ENCODE measurements at regions of chr10 and their contacts with region 1.

Region 1: GRCh38 chr10:124388823-124389612 is 29.7 kb downstream of the OAT start:
- DNase-seq: peak; percentile 73 to 97 (median 88)
- ATAC-seq: peak; percentile 97 to 98 (median 97)
- H3K4me3 ChIP-seq: peak overlapping the region; percentile 35 to 53
- H3K4me3 Mint-ChIP-seq: peak overlapping the region; percentile 46 to 57 (median 57)
- H3K27ac ChIP-seq: peak overlapping the region; percentile 18
- H3K27ac Mint-ChIP-seq: peak overlapping the region in 1 of 2 donors; percentile 58
- H3K4me1 ChIP-seq: peaks cover 0 to 12% of the 10 kb centered on the region in 2 experiments
- H3K4me1 Mint-ChIP-seq: peaks cover 0 to 5% (median 3%) of the 10 kb centered on the region in 3 donors
- H3K27me3 ChIP-seq: peaks cover 3 to 33% of the 10 kb centered on the region in 2 experiments
- H3K27me3 Mint-ChIP-seq: peaks cover 6 to 7% of the 10 kb centered on the region in 2 donors

Region 2: GRCh38 chr10:123994417-123995081 is 394.5 kb before region 1 on chr10:
- CTCF ChIA-PET with region 1: interaction called, 34 to 73 read pairs
- POLR2A ChIA-PET with region 1: no interaction called
- DNase-seq: peak; percentile 32 to 84 (median 67)
- ATAC-seq: peak; percentile 77 to 89 (median 82)
- H3K4me3 ChIP-seq: peak overlapping the region in 1 of 2 donors; percentile 4
- H3K4me3 Mint-ChIP-seq: peak overlapping the region; percentile 28 to 67 (median 60)
- H3K27ac ChIP-seq: no peak overlapping the region
- H3K27ac Mint-ChIP-seq: no peak overlapping the region
- H3K4me1 ChIP-seq: peaks cover 0 to 21% of the 10 kb centered on the region in 2 experiments
- H3K4me1 Mint-ChIP-seq: peaks cover 15 to 20% (median 16%) of the 10 kb centered on the region in 3 donors
- H3K27me3 ChIP-seq: peaks cover 11 to 60% of the 10 kb centered on the region in 2 experiments
- H3K27me3 Mint-ChIP-seq: peaks cover 57 to 72% of the 10 kb centered on the region in 2 donors

Region 3: GRCh38 chr10:124461438-124462347 is 72.7 kb after region 1 on chr10 and contains the start of gene LHPP:
- CTCF ChIA-PET with region 1: interaction called, 4 to 10 read pairs
- POLR2A ChIA-PET with region 1: no interaction called
- DNase-seq: peak; percentile 74 to 89 (median 83)
- ATAC-seq: peak; percentile 96 to 98 (median 97)
- H3K4me3 ChIP-seq: peak within 1 kb of the TSS; percentile 58 to 60
- H3K4me3 Mint-ChIP-seq: peak within 1 kb of the TSS; percentile 79 to 92 (median 87)
- H3K27ac ChIP-seq: peak within 1 kb of the TSS; percentile 74
- H3K27ac Mint-ChIP-seq: peak within 1 kb of the TSS; percentile 97 to 98
- H3K4me1 ChIP-seq: peaks cover 3 to 31% of the 10 kb centered on the region in 2 experiments
- H3K4me1 Mint-ChIP-seq: peaks cover 30 to 32% (median 30%) of the 10 kb centered on the region in 3 donors
- H3K27me3 ChIP-seq: peaks cover 0 to 11% of the 10 kb centered on the region in 2 experiments
- H3K27me3 Mint-ChIP-seq: peaks cover 15% of the 10 kb centered on the region in 2 donors
- total RNA-seq, gene LHPP: 13.2 to 27.4 (median 22.3) TPM

Region 4: GRCh38 chr10:124619195-124619594 is 230.2 kb after region 1 on chr10:
- CTCF ChIA-PET with region 1: no interaction called
- POLR2A ChIA-PET with region 1: no interaction called
- DNase-seq: peak in 22 of 35 experiments; percentile 16 to 56 (median 34)
- ATAC-seq: peak; percentile 37 to 76 (median 62)
- H3K4me3 ChIP-seq: no peak overlapping the region
- H3K4me3 Mint-ChIP-seq: peak overlapping the region in 1 of 3 donors; percentile 56
- H3K27ac ChIP-seq: peak overlapping the region; percentile 54
- H3K27ac Mint-ChIP-seq: peak overlapping the region; percentile 88 to 90
- H3K4me1 ChIP-seq: peaks cover 6 to 84% of the 10 kb centered on the region in 2 experiments
- H3K4me1 Mint-ChIP-seq: peaks cover 15 to 60% (median 34%) of the 10 kb centered on the region in 3 donors
- H3K27me3 ChIP-seq: no peaks in the 10 kb centered on the region
- H3K27me3 Mint-ChIP-seq: no peaks in the 10 kb centered on the region

Measured in T-cell (primary cell).